AG04450 (cell line): ENCODE measurements at regions of chr6 and their contacts with region 1.

Region 1: DNA sequence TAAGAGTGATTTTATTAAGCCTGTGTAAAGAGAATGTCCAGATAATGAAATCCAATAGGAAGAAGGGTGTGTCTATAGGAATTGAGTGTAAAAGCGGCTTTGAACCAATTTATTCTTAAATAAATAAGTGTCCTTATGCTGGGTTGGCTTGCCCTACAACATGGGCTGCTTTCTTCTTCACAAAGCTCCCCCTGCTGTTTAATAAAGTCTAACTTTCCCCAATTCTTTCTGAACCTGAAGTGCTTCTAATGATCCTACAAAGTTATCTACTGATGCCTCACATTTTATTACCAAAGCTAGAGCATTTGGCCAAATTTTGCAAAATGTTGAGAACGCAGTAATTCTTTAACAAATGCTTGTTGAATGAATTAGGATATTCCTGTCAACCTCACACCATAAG is 36.3 kb upstream of the SIRT5 start:
- DNase-seq: peak; percentile 30
- H3K4me3 ChIP-seq: no peak overlapping the region
- H3K27ac ChIP-seq: no peak overlapping the region
- H3K27me3 ChIP-seq: peaks cover 2% of the 10 kb centered on the region
- CTCF ChIP-seq: peak; percentile 56

Region 2: DNA sequence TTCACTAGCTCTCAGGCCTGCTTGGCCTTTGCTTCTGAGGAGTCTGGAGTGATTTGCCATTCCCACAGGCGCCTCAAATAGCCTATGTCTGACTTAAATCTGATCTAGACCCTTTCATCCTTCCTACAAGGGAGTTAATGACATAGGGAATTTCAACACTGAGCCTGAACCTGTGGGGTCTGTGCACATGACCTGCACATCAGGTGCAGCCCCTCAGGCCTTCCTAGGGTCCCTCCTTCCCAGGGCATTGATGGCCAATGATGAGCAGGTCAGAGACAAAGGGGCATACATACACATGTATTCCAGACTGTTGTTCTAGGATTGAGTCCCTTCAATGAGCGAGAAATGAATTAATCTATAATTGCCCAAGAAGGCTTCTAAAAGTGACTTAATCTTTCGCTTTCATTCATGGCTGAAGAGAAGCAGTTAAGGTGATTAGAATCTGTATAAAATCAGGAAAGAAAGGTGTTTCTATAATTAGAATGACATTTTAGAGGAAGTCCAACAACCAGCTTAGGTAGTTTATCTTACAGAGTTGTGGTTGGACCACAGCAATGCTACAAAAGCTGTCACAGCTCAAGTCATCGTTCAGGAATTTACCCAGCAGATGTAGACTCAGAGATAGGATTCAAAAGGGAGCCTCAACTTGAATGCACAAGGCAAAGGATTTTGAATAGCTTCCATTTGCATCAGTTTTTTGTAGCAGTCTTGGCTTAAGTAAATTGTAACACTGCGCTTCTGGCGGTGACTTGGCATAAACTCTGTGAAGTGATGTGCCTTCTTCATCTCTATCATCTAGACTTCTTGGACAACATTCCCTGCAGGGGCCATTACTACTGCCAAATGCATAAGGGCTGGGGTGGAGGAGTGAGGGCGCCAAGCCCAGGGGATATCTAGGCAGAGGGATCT is 182.8 kb before region 1 on chr6:
- CTCF ChIA-PET with region 1: interaction called, 11 read pairs
- POLR2A ChIA-PET with region 1: no interaction called
- DNase-seq: peak; percentile 95
- H3K4me3 ChIP-seq: no peak overlapping the region
- H3K27ac ChIP-seq: peak overlapping the region; percentile 95
- H3K27me3 ChIP-seq: no peaks in the 10 kb centered on the region
- CTCF ChIP-seq: 0 out of 2 replicates have a peak, but pooled peaks have one; percentile 11

Region 3: GRCh38 chr6:13548500-13549210 is 10.6 kb after region 1 on chr6:
- CTCF ChIA-PET with region 1: interaction called, 10 read pairs
- POLR2A ChIA-PET with region 1: no interaction called
- DNase-seq: no peak
- H3K4me3 ChIP-seq: no peak overlapping the region
- H3K27ac ChIP-seq: no peak overlapping the region
- H3K27me3 ChIP-seq: peaks cover 3% of the 10 kb centered on the region
- CTCF ChIP-seq: no peak